CD4-positive, alpha-beta memory T cell (primary cell): ENCODE measurements at regions of chr2 and their contacts with region 1.

Region 1: DNA sequence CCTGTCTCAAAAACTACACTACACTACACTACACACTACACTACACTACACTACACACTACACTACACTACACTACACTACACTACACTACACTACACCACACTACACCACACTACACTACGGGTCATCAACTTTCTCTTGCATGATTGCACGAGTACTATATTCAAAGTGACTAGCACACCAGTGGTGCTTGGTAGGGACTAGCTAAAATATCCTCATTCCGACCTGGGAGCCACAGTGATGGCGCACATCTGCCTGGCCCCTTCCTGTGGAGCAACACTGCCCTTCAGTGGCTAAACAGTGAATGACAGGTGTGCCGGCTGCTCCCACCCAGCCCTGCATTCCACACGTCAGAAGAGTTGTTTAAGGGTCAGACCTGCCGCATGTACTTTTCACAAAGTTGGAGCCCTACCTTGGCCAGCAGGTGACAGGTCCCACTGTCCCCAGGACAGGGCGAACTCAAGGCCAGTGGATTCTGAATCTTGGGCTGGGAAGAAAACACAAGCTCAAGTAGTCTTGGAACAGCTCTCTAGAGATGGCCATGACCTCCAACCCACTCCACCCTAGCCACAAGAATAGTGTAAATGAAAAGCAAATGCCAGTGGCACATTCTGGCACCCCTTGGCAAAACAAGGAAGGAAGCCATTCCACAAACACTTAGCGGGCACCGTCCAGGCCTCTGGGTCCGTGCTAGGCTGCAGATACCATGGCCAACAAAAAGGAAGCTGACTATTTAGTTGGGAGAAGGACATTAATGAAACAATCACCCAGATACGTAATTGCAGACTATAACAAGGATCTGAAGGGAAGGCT is 79.7 kb upstream of the MSH2 start:
- DNase-seq: peak; percentile 44 to 57 (median 50)
- H3K4me3 ChIP-seq: no peak overlapping the region
- H3K4me3 Mint-ChIP-seq: no peak overlapping the region
- H3K27ac ChIP-seq: no peak overlapping the region
- H3K27ac Mint-ChIP-seq: no peak overlapping the region
- H3K4me1 ChIP-seq: no peaks in the 10 kb centered on the region
- H3K4me1 Mint-ChIP-seq: no peaks in the 10 kb centered on the region
- H3K27me3 ChIP-seq: no peaks in the 10 kb centered on the region
- H3K27me3 Mint-ChIP-seq: peaks cover 7% of the 10 kb centered on the region in 2 donors

Region 2: DNA sequence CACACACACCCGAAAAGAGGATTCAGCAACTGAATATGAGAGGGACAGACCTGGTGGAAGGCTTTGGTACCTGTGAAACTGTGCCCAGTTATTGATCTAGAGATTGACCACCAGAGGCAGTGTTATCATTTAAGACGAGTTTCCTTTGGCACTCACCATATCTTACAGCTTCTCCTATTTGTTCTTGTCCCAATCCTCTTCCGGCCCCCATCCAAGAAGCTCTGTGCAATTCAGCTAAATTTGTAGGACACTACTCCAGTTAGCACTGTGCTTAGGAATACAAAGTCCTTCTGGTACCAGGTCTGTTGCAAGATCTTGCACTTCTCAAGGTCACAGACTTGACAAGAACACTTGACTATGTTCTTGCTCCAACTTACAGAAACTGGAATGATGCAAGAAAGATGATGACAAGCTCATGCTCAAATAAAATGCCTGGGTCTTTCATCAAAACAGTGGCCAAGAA is 666.1 kb before region 1 on chr2:
- CTCF ChIA-PET with region 1: interaction called, 3 read pairs
- POLR2A ChIA-PET with region 1: no interaction called
- intact Hi-C with region 1: loop called (anchors 5 kb)
- DNase-seq: peak in 3 of 5 donors; percentile 6 to 10 (median 7)
- H3K4me3 ChIP-seq: no peak overlapping the region
- H3K4me3 Mint-ChIP-seq: no peak overlapping the region
- H3K27ac ChIP-seq: no peak overlapping the region
- H3K27ac Mint-ChIP-seq: no peak overlapping the region
- H3K4me1 ChIP-seq: no peaks in the 10 kb centered on the region
- H3K4me1 Mint-ChIP-seq: peaks cover 0 to 3% (median under 1%) of the 10 kb centered on the region in 4 donors
- H3K27me3 ChIP-seq: no peaks in the 10 kb centered on the region
- H3K27me3 Mint-ChIP-seq: peaks cover 0 to 7% of the 10 kb centered on the region in 2 donors

Region 3: DNA sequence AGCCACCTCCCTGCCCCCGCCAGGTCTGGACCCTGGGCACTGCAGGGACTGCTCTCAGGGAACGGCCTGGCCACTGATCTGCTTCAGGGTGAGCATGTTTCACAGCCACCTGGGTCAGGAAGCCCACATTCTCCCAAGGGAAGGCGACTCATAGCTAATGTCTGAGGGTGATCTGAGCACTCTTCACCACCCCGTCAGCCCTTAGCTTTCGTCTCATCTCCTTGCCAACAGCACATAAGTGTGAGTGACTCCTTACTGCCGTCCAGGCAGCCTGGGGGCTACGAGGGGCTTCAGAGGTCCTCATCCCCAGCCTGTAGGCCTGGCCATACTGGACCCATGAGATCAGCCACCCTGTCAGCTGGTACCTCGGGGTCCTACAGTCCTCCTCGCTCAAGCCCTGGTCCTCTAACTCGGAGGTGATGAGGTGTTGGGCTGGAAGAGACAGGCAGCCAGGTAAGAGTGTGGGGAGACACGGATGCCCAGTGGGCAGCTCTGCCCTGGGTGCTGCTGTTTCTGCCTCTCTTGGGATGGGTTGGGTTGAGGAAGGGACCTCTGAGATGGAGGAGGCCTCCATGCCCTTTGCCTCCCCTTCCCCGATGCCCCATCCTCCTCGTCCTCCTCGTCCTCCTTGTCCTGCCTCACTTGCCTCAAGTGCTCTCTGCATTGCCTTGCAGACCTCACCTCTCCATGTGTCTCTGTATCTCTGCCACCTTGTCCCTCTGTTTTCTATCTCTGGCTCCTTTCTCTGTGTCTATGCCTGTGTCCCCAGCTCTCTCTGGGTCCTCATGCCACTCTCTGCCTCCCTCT is 495.4 kb before region 1 on chr2:
- CTCF ChIA-PET with region 1: no interaction called
- POLR2A ChIA-PET with region 1: no interaction called
- intact Hi-C with region 1: no loop called
- DNase-seq: no peak
- H3K4me3 ChIP-seq: no peak overlapping the region
- H3K4me3 Mint-ChIP-seq: peak overlapping the region in 1 of 8 donors; percentile 21
- H3K27ac ChIP-seq: no peak overlapping the region
- H3K27ac Mint-ChIP-seq: no peak overlapping the region
- H3K4me1 ChIP-seq: no peaks in the 10 kb centered on the region
- H3K4me1 Mint-ChIP-seq: no peaks in the 10 kb centered on the region
- H3K27me3 ChIP-seq: no peaks in the 10 kb centered on the region
- H3K27me3 Mint-ChIP-seq: peaks cover 9 to 23% of the 10 kb centered on the region in 2 donors

Region 4: GRCh38 chr2:47272031-47272864 is 51.0 kb before region 1 on chr2:
- CTCF ChIA-PET with region 1: no interaction called
- POLR2A ChIA-PET with region 1: no interaction called
- intact Hi-C with region 1: loop called (anchors 2 kb)
- DNase-seq: peak; percentile 45 to 55 (median 49)
- H3K4me3 ChIP-seq: peak overlapping the region in 1 of 2 donors; percentile 32
- H3K4me3 Mint-ChIP-seq: peak overlapping the region; percentile 51 to 77 (median 64)
- H3K27ac ChIP-seq: no peak overlapping the region
- H3K27ac Mint-ChIP-seq: peak overlapping the region in 1 of 7 donors; percentile 32
- H3K4me1 ChIP-seq: no peaks in the 10 kb centered on the region
- H3K4me1 Mint-ChIP-seq: peaks cover 0 to 8% (median 3%) of the 10 kb centered on the region in 4 donors
- H3K27me3 ChIP-seq: no peaks in the 10 kb centered on the region
- H3K27me3 Mint-ChIP-seq: no peaks in the 10 kb centered on the region

Region 5: GRCh38 chr2:47336259-47337238 is 13.3 kb after region 1 on chr2:
- CTCF ChIA-PET with region 1: interaction called, 12 read pairs
- POLR2A ChIA-PET with region 1: no interaction called
- intact Hi-C with region 1: no loop called
- DNase-seq: no peak
- H3K4me3 ChIP-seq: no peak overlapping the region
- H3K4me3 Mint-ChIP-seq: no peak overlapping the region
- H3K27ac ChIP-seq: no peak overlapping the region
- H3K27ac Mint-ChIP-seq: no peak overlapping the region
- H3K4me1 ChIP-seq: no peaks in the 10 kb centered on the region
- H3K4me1 Mint-ChIP-seq: peaks cover 0 to 5% (median 2%) of the 10 kb centered on the region in 4 donors
- H3K27me3 ChIP-seq: no peaks in the 10 kb centered on the region
- H3K27me3 Mint-ChIP-seq: peaks cover 0 to 5% of the 10 kb centered on the region in 2 donors